ENCODE measurements at regions of chr17 and their contacts with region 1.

Region 1: DNA sequence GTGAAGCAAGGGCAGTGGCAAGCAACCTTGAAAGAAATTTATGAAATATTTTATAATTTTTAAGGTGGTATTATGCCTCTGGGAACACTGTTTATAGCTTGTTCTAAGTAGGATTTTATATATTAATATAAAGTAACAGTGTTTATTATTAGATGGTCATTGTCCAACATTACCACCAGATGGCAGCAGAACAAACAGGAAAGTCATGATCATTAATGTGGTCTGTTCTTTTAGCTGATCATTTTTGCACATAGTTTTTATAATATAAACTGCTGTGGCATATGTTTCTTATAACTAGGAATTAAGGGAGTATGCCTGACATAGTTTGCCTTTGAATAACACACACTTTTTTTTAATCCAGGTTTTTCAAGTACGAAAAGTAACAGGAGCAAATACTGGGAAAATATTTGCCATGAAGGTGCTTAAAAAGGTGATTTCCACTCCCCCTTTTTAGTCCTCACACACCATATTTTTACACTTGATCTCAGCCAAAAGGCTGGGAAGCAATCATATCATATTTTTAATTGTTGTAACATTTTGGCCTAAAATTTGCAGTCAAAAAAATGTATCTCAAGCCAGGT is 21.4 kb downstream of the RPS6KB1 start:
- DNase-seq: no peak
- H3K4me3 Mint-ChIP-seq: no peak overlapping the region
- H3K27ac Mint-ChIP-seq: no peak overlapping the region
- H3K4me1 Mint-ChIP-seq: no peaks in the 10 kb centered on the region
- H3K27me3 Mint-ChIP-seq: no peaks in the 10 kb centered on the region

Region 2: GRCh38 chr17:59903455-59903854 is 10.9 kb before region 1 on chr17:
- CTCF ChIA-PET with region 1: interaction called, 11 read pairs
- POLR2A ChIA-PET with region 1: no interaction called
- DNase-seq: no peak
- H3K4me3 Mint-ChIP-seq: no peak overlapping the region
- H3K27ac Mint-ChIP-seq: no peak overlapping the region
- H3K4me1 Mint-ChIP-seq: peaks cover 13% of the 10 kb centered on the region
- H3K27me3 Mint-ChIP-seq: no peaks in the 10 kb centered on the region

Measured in activated CD4-positive, alpha-beta memory T cell treated with anti-CD3 and anti-CD28 coated beads, Interleukin-2, amount 10 ng/mL, durations not matched to agents 7 days and 5 days (primary cell).